ENCODE measurements at regions of chr16 and their contacts with region 1.

Region 1: DNA sequence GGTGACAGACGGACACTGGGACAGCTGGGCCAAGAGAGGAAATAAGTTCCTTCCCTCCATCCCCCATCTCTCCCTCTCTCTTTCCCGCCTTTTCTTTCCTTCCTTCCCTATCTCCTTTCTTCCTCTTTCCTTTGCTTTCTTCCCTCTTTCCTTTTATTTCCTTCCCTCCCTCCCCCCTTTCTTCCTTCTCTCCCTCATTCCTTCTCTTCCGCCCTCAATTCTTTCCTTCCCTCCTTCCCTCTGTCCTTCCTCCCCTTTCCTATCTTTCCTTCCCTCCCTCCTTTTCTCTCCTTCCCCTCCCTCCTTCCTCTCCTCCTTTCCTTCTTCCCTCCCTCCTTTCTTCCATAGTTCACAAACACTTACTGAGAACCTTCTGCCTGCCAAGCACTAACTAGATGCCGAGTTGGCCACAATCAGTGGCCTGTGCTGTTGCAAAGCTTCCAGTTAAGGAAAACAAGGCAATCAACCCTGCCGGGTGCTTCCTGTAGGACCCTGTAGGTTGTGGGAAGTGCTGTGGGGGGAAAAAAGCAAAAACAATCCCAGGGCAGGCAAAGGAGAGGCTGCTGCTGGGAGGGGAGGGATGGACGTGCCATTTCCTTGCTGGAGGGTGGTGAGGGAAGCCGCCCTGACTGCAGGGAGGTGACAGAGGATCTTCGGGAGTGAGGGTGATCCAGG is 31.7 kb downstream of the ABCC6 start:
- DNase-seq: no peak
- H3K4me3 ChIP-seq: no peak overlapping the region
- H3K27ac ChIP-seq: no peak overlapping the region
- H3K4me1 ChIP-seq: no peaks in the 10 kb centered on the region
- H3K27me3 ChIP-seq: peaks cover 0 to 6% (median 0%) of the 10 kb centered on the region in 4 donors
- CTCF ChIP-seq: no peak
- POLR2A ChIP-seq: no peak

Region 2: DNA sequence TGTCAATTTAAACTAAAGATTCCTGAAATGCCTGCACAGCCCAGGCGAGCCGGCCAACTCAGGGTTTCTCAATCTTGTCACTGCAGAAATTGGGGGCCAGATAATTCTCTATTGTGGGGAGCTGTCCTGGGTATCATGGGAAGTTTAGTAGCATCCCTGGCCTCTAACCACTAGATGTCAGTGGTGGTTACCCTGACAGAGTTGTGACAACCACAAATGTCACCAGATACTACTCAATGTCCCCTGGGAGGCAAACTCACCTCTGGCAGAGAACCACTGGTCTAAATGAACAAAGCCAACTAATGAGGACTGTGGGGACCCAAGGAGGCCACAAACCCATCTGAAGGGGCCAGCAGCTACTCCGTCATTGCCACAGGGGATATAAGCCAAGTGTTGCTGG is 425.8 kb before region 1 on chr16:
- intact Hi-C with region 1: loop called (anchors 10 kb)
- DNase-seq: no peak
- H3K4me3 ChIP-seq: no peak overlapping the region
- H3K27ac ChIP-seq: peak overlapping the region in 2 of 4 donors; percentile 33 to 39
- H3K4me1 ChIP-seq: peaks cover 0 to 17% (median 4%) of the 10 kb centered on the region in 3 donors
- H3K27me3 ChIP-seq: no peaks in the 10 kb centered on the region
- CTCF ChIP-seq: peak; percentile 36 to 65 (median 47)
- POLR2A ChIP-seq: no peak

Region 3: DNA sequence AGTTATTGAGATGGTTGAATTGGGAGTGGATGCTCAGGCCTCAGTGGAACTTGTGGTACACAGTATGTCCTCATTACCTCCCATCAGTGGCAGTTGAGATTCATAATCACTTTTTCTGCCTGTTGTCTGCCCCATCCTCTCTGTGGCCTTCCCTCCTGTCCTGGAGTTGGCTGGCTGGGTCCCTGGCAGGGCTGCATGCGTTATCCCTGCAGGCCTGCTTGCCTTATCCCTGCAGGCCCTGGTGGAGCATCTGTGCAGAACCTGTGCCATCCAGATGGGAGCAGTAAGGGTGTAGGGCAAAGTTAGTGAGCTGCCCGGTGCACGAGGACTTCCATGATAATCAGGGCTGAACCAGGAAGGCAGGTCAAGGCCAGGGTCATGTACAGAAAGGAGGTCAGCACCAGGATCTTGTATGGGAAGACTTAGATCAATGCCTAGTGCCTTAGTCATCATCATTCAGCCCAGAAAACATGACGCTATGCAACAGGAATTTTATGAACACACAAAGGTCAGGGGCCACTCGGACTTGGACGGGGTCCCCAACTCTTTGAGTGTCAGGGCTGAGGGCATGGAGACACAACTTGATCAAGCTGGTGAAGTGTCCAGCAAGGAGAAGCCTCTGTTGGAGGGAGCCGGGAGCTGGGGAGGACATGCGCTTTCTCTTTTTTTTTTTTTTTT is 195.1 kb before region 1 on chr16:
- intact Hi-C with region 1: no loop called
- DNase-seq: no peak
- H3K4me3 ChIP-seq: no peak overlapping the region
- H3K27ac ChIP-seq: peak overlapping the region; percentile 44 to 84 (median 74)
- H3K4me1 ChIP-seq: peaks cover 5 to 63% (median 50%) of the 10 kb centered on the region in 3 donors
- H3K27me3 ChIP-seq: no peaks in the 10 kb centered on the region
- CTCF ChIP-seq: no peak
- POLR2A ChIP-seq: no peak

Measured in esophagus squamous epithelium (tissue), 5 donors.